ENCODE measurements at regions of chr1 and their contacts with region 1.

Region 1: DNA sequence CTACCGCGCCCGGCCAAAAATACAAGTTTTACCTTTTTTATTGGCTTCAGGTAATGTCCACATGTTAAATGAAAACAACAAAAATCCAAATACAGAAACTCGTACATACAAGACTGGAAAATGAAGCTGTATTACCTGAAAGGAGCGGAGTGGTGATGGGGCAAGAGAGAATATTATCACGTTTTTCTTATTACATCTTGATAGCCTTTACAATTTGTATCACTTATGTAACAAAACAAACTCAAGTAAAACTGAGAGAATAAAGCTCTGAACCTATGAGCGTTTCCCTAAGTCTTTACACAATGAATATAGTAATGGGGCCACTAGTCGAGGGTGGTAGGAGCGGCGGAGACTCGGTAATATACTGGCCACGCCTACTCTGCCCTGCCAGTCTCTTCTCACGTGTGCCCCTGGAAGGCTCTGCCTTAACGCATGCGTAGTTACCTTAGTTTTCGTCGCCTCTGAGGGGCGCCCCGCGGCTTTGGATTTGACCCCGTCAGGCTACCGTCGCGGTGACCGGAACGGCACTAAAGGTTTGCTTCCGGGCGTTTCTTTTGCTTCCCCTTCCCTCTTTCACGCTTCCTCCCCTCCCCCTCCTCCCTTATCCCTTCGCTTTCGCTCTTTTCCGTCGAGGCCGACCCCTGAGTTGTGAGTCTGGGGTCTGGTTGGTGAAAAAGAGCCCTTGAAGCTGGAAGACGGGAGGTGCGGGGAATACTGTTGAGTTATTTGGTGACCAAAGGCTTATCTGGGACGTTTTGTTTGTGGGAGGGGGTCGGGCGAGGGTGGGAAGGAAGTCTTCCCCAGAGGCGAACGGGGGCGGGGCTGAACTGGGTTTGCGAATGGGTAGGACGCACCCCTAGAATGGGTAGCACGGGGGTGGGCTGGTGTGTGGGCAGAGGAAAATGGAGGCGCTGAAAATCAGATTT is at the start of gene SETDB1:
- DNase-seq: peak; percentile 95
- ATAC-seq: peak; percentile 93
- H3K4me3 ChIP-seq: peak within 1 kb of the TSS; percentile 74 to 77
- H3K27ac ChIP-seq: peak within 1 kb of the TSS; percentile 60
- H3K4me1 ChIP-seq: peaks cover 6 to 30% of the 10 kb centered on the region in 2 experiments
- H3K27me3 ChIP-seq: no peaks in the 10 kb centered on the region
- CTCF ChIP-seq: no peak
- POLR2A ChIP-seq: peak; percentile 56
- RAD21 ChIP-seq: no peak
- total RNA-seq, gene SETDB1: 54.3 TPM

Region 2: GRCh38 chr1:150876119-150876454 is 50.0 kb before region 1 on chr1:
- CTCF ChIA-PET with region 1: interaction called, 3 read pairs
- POLR2A ChIA-PET with region 1: no interaction called
- RAD21 ChIA-PET with region 1: no interaction called
- intact Hi-C with region 1: loop called (anchors 2 kb)
- DNase-seq: peak; percentile 31
- ATAC-seq: peak; percentile 57
- H3K4me3 ChIP-seq: peak overlapping the region; percentile 82 to 83
- H3K27ac ChIP-seq: peak overlapping the region; percentile 52
- H3K4me1 ChIP-seq: peaks cover 11 to 22% of the 10 kb centered on the region in 2 experiments; a peak in 3 of 4 replicates
- H3K27me3 ChIP-seq: no peaks in the 10 kb centered on the region
- CTCF ChIP-seq: no peak
- POLR2A ChIP-seq: no peak
- RAD21 ChIP-seq: no peak

Region 3: GRCh38 chr1:150979092-150980056 is 53.3 kb after region 1 on chr1:
- CTCF ChIA-PET with region 1: interaction called, 6 read pairs
- POLR2A ChIA-PET with region 1: no interaction called
- RAD21 ChIA-PET with region 1: no interaction called
- intact Hi-C with region 1: loop called (anchors 5 kb)
- DNase-seq: peak; percentile 78
- ATAC-seq: peak; percentile 42
- H3K4me3 ChIP-seq: no peak overlapping the region
- H3K27ac ChIP-seq: peak overlapping the region; percentile 92
- H3K4me1 ChIP-seq: peaks cover 71 to 83% of the 10 kb centered on the region in 2 experiments
- H3K27me3 ChIP-seq: no peaks in the 10 kb centered on the region
- CTCF ChIP-seq: peak in 2 of 3 experiments; percentile 100; a peak in 4 of 6 replicates
- POLR2A ChIP-seq: no peak
- RAD21 ChIP-seq: no peak

Region 4: DNA sequence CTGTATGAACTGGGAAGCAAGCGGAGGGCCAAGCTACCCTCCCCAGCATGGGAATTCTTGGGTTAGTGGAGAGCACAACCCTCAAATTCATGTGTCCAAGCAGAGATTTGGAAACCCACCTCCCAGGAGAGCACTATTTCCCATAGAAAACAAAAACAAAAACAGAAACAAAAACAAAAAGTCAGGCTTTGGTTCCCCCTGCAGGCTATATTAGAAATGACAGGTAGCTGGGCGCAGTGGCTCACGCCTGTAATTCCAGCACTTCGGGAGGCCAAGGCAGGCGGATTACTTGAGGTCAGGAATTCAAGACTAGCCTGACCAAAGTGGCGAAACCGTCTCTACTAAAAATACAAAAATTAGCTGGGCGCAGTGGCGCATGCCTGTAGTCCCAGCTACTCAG is 69.8 kb after region 1 on chr1:
- CTCF ChIA-PET with region 1: no interaction called
- POLR2A ChIA-PET with region 1: no interaction called
- RAD21 ChIA-PET with region 1: no interaction called
- intact Hi-C with region 1: no loop called
- DNase-seq: no peak
- ATAC-seq: peak; percentile 73
- H3K4me3 ChIP-seq: no peak overlapping the region
- H3K27ac ChIP-seq: no peak overlapping the region
- H3K4me1 ChIP-seq: peaks cover 6 to 37% of the 10 kb centered on the region in 2 experiments; a peak in 3 of 4 replicates
- H3K27me3 ChIP-seq: no peaks in the 10 kb centered on the region
- CTCF ChIP-seq: peak; percentile 61 to 85 (median 76); a peak in 5 of 6 replicates
- POLR2A ChIP-seq: no peak
- RAD21 ChIP-seq: peak; percentile 87